PC-3 (cell line): ENCODE measurements at regions of chrX and their contacts with region 1.

Region 1: GRCh38 chrX:87975365-87975764 is 457.8 kb downstream of the KLHL4 start:
- DNase-seq: no peak
- ATAC-seq: no peak
- H3K4me3 ChIP-seq: no peak overlapping the region
- H3K27ac ChIP-seq: no peak overlapping the region
- H3K4me1 ChIP-seq: no peaks in the 10 kb centered on the region
- H3K27me3 ChIP-seq: no peaks in the 10 kb centered on the region
- CTCF ChIP-seq: no peak

Region 2: DNA sequence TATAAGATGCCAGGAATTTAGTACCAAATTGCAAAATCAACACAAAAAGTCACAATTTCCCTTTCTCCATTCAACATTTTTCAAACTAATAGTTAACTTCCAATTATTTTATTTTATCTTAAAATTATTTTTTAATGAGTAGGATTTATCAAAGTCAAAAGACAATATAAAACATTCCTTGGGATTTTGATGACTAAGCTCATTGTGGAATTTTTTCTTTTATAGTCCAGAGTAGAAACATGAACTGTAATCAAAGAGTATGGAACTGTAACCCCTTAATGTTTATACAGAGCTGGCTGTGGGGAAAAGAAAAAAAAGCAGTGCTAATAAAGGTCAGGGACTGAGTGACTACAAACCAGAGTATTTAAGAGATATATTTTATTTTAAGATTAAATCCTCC is 403.0 kb after region 1 on chrX:
- CTCF ChIA-PET with region 1: no interaction called
- POLR2A ChIA-PET with region 1: no interaction called
- intact Hi-C with region 1: loop called (anchors 5 kb)
- DNase-seq: no peak
- ATAC-seq: no peak
- H3K4me3 ChIP-seq: no peak overlapping the region
- H3K27ac ChIP-seq: no peak overlapping the region
- H3K4me1 ChIP-seq: no peaks in the 10 kb centered on the region
- H3K27me3 ChIP-seq: no peaks in the 10 kb centered on the region
- CTCF ChIP-seq: no peak